Activated T-helper 2 cell treated with anti-CD3 and anti-CD28 coated beads, Interferon-gamma antibody, Interleukin-2, Interleukin-4, amounts not matched to agents 10 μg/mL and 5 μg/mL and 100 μg/mL, durations not matched to agents 14 hours and 24 hours and 36 hours (primary cell): ENCODE measurements at regions of chr5 and their contacts with region 1.

Region 1: DNA sequence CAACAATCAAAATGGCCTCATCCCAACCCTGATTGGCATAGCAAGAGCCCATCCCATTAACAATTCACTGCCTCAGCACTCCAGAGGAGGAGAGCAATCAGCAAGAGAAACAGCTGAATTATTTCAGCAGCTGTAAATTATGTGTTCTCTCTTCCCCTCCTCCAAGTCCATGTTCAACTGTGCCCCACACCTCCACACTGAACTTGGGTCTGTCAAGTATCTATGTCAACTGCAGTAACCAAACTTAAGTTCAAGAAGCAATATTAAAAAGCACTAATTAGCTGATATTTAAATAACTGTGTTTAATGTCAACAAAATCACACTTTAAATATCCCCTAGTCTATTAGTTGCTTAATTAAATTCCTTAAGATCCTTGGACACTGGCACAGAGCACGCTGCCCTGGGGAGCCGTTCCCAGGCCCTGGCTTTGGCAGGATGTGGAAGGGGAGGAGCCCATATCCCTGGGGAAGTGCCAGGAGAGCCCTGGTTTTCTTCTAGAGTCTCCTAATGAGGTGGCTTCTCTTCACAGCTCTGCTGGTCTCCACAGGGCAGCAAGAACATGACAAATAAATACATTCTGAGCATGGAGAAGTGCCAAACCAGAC is 50.6 kb downstream of the SIL1 start:
- DNase-seq: no peak
- H3K4me3 Mint-ChIP-seq: no peak overlapping the region
- H3K27ac Mint-ChIP-seq: no peak overlapping the region
- H3K4me1 Mint-ChIP-seq: peaks cover 29% of the 10 kb centered on the region
- H3K27me3 Mint-ChIP-seq: no peaks in the 10 kb centered on the region

Region 2: DNA sequence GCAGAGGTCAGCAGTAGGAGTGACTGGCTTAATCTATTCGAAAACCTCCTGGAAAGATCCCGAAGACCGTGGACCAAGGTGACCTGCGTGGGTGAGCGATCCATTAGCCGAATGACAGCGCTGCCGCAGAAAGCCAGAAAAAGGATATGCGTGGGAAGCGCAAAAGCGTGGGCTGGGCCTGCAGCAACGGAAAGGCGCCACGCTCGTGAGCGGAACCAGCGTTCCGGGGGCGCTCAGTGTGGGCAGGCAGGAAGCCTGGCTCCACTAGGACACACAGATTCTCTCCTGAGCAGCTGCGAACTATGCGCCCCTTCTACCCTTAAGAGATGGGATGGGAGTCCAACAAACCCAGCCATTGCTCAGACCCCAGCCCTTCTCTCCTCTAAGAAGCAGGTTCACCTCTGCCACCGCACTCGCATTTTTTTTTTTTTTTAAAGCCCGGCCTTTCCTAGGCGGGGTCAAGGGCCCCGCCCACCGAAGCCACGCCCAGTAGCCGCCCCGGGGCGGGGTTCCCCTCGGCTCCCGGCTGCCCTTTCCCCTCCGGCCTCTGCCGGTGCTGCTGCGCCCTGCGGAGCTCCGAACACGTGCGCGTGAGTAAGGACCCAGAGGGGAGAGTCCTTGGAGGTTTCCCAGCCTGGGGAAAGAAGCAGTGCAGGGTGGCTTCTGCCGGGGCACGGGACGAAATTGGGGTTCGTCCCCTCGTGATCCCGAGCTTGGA is 126.1 kb after region 1 on chr5:
- intact Hi-C with region 1: loop called (anchors 5 kb)
- DNase-seq: peak; percentile 88
- H3K4me3 Mint-ChIP-seq: peak overlapping the region; percentile 94
- H3K27ac Mint-ChIP-seq: peak overlapping the region; percentile 42
- H3K4me1 Mint-ChIP-seq: peaks cover 42% of the 10 kb centered on the region
- H3K27me3 Mint-ChIP-seq: no peaks in the 10 kb centered on the region